Sigmoid colon (tissue), 7 donors: ENCODE measurements at regions of chr16 and their contacts with region 1.

Region 1: GRCh38 chr16:8868416-8869211 is at the start of gene CARHSP1:
- DNase-seq: peak; percentile 93
- H3K4me3 ChIP-seq: peak within 1 kb of the TSS; percentile 52 to 82 (median 66)
- H3K27ac ChIP-seq: peak within 1 kb of the TSS; percentile 74 to 89 (median 84)
- H3K4me1 ChIP-seq: peaks cover 0 to 52% (median 45%) of the 10 kb centered on the region in 4 donors
- H3K27me3 ChIP-seq: peaks cover 0 to 15% (median 0%) of the 10 kb centered on the region in 3 donors
- CTCF ChIP-seq: no peak
- EP300 ChIP-seq: no peak
- POLR2A ChIP-seq: peak; percentile 9 to 49
- total RNA-seq, gene CARHSP1: 32.1 to 79.5 (median 52.8) TPM

Region 2: DNA sequence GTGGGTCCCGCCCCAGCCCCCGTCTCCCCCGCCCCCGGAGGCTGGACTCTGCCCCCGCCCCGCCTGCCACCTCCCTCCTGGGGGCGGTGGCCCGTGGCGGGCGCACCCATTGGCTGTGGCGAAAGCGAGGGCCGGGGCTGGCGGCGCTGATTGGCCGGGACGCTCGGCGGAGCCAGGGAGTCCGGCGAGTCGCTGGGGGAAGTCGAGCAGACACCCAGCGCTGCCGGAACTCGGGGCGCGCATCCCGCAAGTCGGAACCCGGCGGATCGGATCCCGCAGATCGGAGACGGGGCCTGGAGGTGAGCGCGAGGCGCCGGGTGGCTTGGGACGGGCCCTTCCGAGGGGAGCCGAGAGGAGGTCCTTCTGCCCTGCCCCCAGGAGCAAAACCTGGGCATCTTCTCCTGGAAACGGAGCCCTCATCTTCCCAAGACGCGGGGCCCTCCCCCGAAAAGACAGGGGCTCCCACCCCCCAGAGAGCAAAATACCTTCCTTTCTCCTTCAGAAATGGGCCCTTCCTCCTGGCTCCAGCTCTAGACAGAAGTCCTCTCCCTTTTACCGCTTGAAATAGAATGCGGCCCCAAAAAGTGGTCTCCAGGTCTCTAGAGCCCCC is 194.1 kb before region 1 on chr16 and contains the start of gene ABAT:
- intact Hi-C with region 1: loop called (anchors 5 kb)
- DNase-seq: peak; percentile 94
- H3K4me3 ChIP-seq: peak within 1 kb of the TSS; percentile 27 to 64 (median 58)
- H3K27ac ChIP-seq: peak within 1 kb of the TSS in 2 of 4 donors; percentile 22 to 50
- H3K4me1 ChIP-seq: peaks cover 0 to 14% (median 11%) of the 10 kb centered on the region in 4 donors
- H3K27me3 ChIP-seq: no peaks in the 10 kb centered on the region
- CTCF ChIP-seq: no peak
- EP300 ChIP-seq: no peak
- POLR2A ChIP-seq: peak in 1 of 2 donors; percentile 20
- total RNA-seq, gene ABAT: 4.1 to 8.3 (median 6.0) TPM